Vagina (tissue), 2 donors: ENCODE measurements at regions of chr9 and their contacts with region 1.

Region 1: DNA sequence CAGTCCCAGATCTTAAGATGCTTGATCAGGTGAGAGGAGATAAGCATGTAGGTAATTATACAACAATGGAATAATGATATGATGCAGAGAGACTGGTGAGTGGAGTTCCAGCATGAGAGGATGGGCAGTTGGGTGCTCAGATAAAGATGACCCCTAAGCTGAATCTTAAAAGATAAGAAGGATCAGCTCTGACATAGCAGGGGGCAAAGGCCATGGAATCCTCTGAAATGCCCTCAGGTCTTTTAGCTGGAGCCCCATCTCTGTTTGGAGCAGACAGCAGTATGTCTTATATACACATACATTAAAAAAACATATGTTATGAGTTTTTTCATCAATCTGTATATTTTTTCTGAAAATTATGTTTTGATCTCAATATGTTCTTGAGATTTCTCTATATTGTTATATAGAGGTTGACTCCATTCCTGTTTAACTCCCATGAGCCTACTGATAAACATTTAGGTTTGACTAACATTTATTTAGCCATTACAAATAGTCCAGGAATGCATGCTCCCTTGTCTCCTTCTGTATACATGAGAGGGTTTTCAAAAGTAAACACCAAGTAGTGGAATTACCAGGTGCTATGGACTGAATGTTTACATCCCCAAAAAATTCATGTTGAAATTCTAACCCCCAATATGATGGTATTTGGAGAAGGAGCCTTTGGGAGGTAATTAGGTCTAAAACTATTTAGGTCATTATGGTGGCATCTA is 3.6 kb upstream of the OR5C1 start:
- DNase-seq: no peak
- H3K4me3 ChIP-seq: no peak overlapping the region
- H3K27ac ChIP-seq: no peak overlapping the region
- H3K4me1 ChIP-seq: no peaks in the 10 kb centered on the region
- H3K27me3 ChIP-seq: no peaks in the 10 kb centered on the region
- CTCF ChIP-seq: no peak
- POLR2A ChIP-seq: no peak

Region 2: GRCh38 chr9:121929893-121930875 is 854.9 kb before region 1 on chr9:
- intact Hi-C with region 1: loop called (anchors 10 kb)
- DNase-seq: no peak
- H3K4me3 ChIP-seq: no peak overlapping the region
- H3K27ac ChIP-seq: no peak overlapping the region
- H3K4me1 ChIP-seq: no peaks in the 10 kb centered on the region
- H3K27me3 ChIP-seq: no peaks in the 10 kb centered on the region
- CTCF ChIP-seq: no peak
- POLR2A ChIP-seq: no peak

Region 3: GRCh38 chr9:122845116-122845515 is 60.0 kb after region 1 on chr9:
- intact Hi-C with region 1: no loop called
- DNase-seq: no peak
- H3K4me3 ChIP-seq: no peak overlapping the region
- H3K27ac ChIP-seq: no peak overlapping the region
- H3K4me1 ChIP-seq: no peaks in the 10 kb centered on the region
- H3K27me3 ChIP-seq: no peaks in the 10 kb centered on the region
- CTCF ChIP-seq: no peak
- POLR2A ChIP-seq: no peak

Region 4: GRCh38 chr9:124164811-124165210 is 1379.7 kb after region 1 on chr9:
- intact Hi-C with region 1: no loop called
- DNase-seq: no peak
- H3K4me3 ChIP-seq: no peak overlapping the region
- H3K27ac ChIP-seq: no peak overlapping the region
- H3K4me1 ChIP-seq: no peaks in the 10 kb centered on the region
- H3K27me3 ChIP-seq: no peaks in the 10 kb centered on the region
- CTCF ChIP-seq: no peak
- POLR2A ChIP-seq: no peak